IMR-90 (cell line): ENCODE measurements at regions of chr17 and their contacts with region 1.

Region 1: GRCh38 chr17:29579866-29580771 is 9.3 kb downstream of the GIT1 start:
- DNase-seq: peak; percentile 75
- ATAC-seq: peak; percentile 87
- H3K4me3 ChIP-seq: no peak overlapping the region
- H3K27ac ChIP-seq: no peak overlapping the region
- H3K4me1 ChIP-seq: peaks cover 9% of the 10 kb centered on the region; the same call in 1 of the 2 replicates
- H3K27me3 ChIP-seq: no peaks in the 10 kb centered on the region
- CTCF ChIP-seq: peak; percentile 91
- POLR2A ChIP-seq: no peak
- RAD21 ChIP-seq: peak; percentile 92

Region 2: GRCh38 chr17:29777663-29778062 is 197.5 kb after region 1 on chr17:
- CTCF ChIA-PET with region 1: no interaction called
- POLR2A ChIA-PET with region 1: no interaction called
- dilution Hi-C with region 1: no loop called
- in situ Hi-C with region 1: no loop called
- intact Hi-C with region 1: loop called (anchors 1 kb)
- DNase-seq: no peak
- ATAC-seq: no peak
- H3K4me3 ChIP-seq: no peak overlapping the region
- H3K27ac ChIP-seq: no peak overlapping the region
- H3K4me1 ChIP-seq: peaks cover 3% of the 10 kb centered on the region; the same call in 1 of the 2 replicates
- H3K27me3 ChIP-seq: no peaks in the 10 kb centered on the region
- CTCF ChIP-seq: no peak
- POLR2A ChIP-seq: no peak
- RAD21 ChIP-seq: no peak

Region 3: GRCh38 chr17:31251105-31251969 is 1671.2 kb after region 1 on chr17:
- CTCF ChIA-PET with region 1: no interaction called
- POLR2A ChIA-PET with region 1: interaction called, 10 read pairs
- dilution Hi-C with region 1: no loop called
- in situ Hi-C with region 1: no loop called
- intact Hi-C with region 1: no loop called
- DNase-seq: no peak
- ATAC-seq: no peak
- H3K4me3 ChIP-seq: no peak overlapping the region
- H3K27ac ChIP-seq: no peak overlapping the region
- H3K4me1 ChIP-seq: peaks cover 13% of the 10 kb centered on the region; the same call in 1 of the 2 replicates
- H3K27me3 ChIP-seq: no peaks in the 10 kb centered on the region
- CTCF ChIP-seq: no peak
- POLR2A ChIP-seq: no peak
- RAD21 ChIP-seq: no peak